IMR-90 (cell line): ENCODE measurements at regions of chr4 and their contacts with region 1.

Region 1: GRCh38 chr4:186781032-186781917 is 57.6 kb upstream of the FAT1 start:
- DNase-seq: peak; percentile 91
- ATAC-seq: peak; percentile 95
- H3K4me3 ChIP-seq: no peak overlapping the region
- H3K27ac ChIP-seq: peak overlapping the region; percentile 92
- H3K4me1 ChIP-seq: peaks cover 10% of the 10 kb centered on the region
- H3K27me3 ChIP-seq: no peaks in the 10 kb centered on the region
- CTCF ChIP-seq: no peak
- POLR2A ChIP-seq: no peak
- RAD21 ChIP-seq: no peak

Region 2: DNA sequence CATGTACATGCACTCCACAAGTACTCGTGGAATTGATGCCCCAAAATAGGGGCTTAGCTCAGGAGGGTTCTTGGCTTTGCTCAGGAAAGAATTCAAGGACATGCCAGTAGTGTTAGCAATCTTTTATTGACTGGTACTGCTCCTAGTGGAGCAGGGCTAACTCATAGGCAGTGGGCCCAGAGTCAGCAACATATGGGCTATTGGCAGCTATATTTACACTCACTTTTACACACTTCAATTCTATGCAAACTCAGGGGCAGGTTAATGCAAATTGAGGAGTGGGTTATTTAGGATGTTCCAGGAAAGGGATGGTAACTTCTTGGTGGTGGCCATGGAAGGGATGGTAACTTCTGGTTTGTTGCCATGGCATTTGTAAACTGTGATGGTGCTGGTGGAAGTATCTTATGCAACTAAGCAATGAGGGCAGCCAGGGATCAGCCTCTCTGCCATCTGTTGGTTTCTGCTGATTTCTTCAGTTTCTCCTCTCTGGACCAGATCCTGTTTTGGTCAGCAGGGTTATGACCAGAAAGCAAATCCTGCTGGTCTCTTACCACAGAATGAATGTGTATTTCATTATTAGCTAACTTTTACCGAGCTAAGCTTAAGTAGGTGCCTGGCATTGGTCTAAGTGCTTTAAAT is 11.6 kb after region 1 on chr4:
- CTCF ChIA-PET with region 1: interaction called, 10 read pairs
- POLR2A ChIA-PET with region 1: no interaction called
- dilution Hi-C with region 1: no loop called
- in situ Hi-C with region 1: no loop called
- intact Hi-C with region 1: no loop called
- DNase-seq: peak; percentile 68
- ATAC-seq: peak; percentile 47
- H3K4me3 ChIP-seq: no peak overlapping the region
- H3K27ac ChIP-seq: no peak overlapping the region
- H3K4me1 ChIP-seq: peaks cover 12% of the 10 kb centered on the region
- H3K27me3 ChIP-seq: no peaks in the 10 kb centered on the region
- CTCF ChIP-seq: no peak
- POLR2A ChIP-seq: no peak
- RAD21 ChIP-seq: no peak

Region 3: DNA sequence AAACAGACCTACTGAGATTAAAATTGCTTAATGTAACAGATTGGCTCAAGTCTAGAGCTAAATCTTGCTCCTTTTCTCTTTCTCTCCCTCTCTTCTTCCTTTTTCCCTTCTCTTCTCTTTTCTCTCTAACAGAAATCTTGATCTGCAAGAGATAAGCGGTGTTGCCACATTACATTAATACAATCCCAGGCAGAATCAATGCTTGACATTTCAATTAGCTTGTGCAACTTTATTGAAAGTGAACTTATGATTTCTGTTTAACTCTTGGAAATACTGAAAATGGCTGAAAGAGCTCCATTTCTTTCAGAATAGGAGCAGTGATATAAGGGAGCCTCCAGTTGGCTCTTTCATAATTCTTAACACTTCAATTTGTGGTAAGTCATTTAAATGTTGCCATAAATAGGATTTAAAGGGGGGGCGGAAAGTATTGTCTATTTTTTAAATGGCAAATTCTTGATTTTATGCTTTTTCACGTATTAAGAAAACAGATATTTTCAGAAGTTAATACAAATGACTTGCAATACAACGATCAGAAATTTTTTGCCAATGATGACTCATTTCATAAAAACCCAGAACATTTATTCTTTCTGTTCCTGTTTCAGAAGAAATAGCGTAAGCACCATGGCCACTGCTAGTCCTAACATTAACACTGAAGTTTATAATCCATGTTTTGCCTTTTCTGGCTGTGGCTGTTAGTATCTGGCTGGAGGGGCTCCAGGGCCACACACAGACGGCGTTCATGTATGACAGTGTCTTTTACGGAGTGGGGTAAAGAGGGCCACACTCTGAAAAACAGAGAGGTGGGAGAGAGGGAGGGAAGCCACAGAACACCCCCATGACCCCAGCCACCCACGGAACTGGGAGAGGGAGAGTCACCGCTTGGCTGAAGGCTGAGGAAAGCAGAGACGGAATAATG is 58.1 kb after region 1 on chr4:
- CTCF ChIA-PET with region 1: no interaction called
- POLR2A ChIA-PET with region 1: no interaction called
- dilution Hi-C with region 1: no loop called
- in situ Hi-C with region 1: no loop called
- intact Hi-C with region 1: loop called (anchors 1 kb)
- DNase-seq: peak; percentile 92
- ATAC-seq: peak; percentile 81
- H3K4me3 ChIP-seq: peak overlapping the region; percentile 28
- H3K27ac ChIP-seq: peak overlapping the region; percentile 90
- H3K4me1 ChIP-seq: peaks cover 18% of the 10 kb centered on the region
- H3K27me3 ChIP-seq: no peaks in the 10 kb centered on the region
- CTCF ChIP-seq: no peak
- POLR2A ChIP-seq: peak; percentile 42; the same call in 1 of the 2 replicates
- RAD21 ChIP-seq: no peak

Region 4: GRCh38 chr4:187576751-187577150 is 795.5 kb after region 1 on chr4:
- CTCF ChIA-PET with region 1: no interaction called
- POLR2A ChIA-PET with region 1: no interaction called
- dilution Hi-C with region 1: no loop called
- in situ Hi-C with region 1: no loop called
- intact Hi-C with region 1: no loop called
- DNase-seq: no peak
- ATAC-seq: no peak
- H3K4me3 ChIP-seq: no peak overlapping the region
- H3K27ac ChIP-seq: no peak overlapping the region
- H3K4me1 ChIP-seq: peaks cover 2% of the 10 kb centered on the region; the same call in 1 of the 2 replicates
- H3K27me3 ChIP-seq: no peaks in the 10 kb centered on the region
- CTCF ChIP-seq: no peak
- POLR2A ChIP-seq: no peak
- RAD21 ChIP-seq: no peak